H1 (cell line): ENCODE measurements at regions of chr12 and their contacts with region 1.

Region 1: DNA sequence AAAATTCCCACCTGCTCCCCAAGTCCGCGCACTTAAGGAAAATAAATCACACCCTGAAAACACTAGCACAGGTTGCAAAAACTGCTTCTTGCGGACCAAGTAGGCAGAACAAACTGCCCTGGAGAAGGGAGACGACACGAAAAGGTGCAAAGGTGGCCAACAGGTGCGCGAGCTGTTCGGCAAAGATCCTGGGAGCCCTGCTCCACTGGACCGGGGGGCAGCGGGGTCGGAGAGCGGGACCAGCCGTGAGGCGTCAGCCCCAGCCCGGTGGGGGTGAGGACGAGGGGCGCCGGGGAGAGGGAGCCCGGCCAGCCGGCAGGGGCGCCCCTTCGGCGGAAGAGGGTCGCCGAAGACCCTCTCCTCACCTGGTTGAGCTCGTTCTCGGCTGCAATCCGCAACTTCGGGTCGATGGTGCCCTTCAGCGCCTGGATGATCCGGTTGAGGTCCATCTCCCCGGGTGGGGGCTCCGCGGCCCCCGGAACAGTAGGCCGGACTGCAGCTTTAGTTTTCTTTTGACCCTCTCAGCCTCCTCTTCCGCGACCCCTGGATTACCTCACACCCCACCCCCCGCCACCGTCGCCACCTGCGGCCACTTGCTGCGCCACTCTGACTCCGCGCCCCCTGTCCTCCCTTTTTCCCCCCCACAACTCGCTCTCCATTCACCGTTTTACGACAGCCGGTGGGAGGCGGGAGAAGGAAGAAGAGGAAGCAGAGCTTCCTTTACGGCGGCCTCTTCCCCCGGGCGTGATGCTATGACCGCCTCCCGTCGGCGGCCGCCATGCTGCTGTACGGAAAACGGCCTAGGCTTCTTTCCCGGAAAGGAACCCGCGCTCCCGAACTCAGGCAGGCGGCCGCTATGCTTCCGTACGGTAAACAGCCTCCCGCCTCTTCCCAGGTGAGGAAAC is at the start of gene IPO8:
- DNase-seq: peak; percentile 86 to 91
- H3K4me3 ChIP-seq: peak within 1 kb of the TSS; percentile 71 to 92 (median 90)
- H3K27ac ChIP-seq: peak within 1 kb of the TSS; percentile 68; the same call in 1 of the 2 replicates
- H3K4me1 ChIP-seq: peaks cover 0 to 4% (median 2%) of the 10 kb centered on the region in 4 experiments; a peak in 5 of 7 replicates
- H3K27me3 ChIP-seq: no peaks in the 10 kb centered on the region
- CTCF ChIP-seq: peak; percentile 6 to 42 (median 33); a peak in 2 of 4 replicates
- EP300 ChIP-seq: peak in 1 of 2 experiments; percentile 10; a peak in 1 of 3 replicates
- POLR2A ChIP-seq: peak in 1 of 2 experiments; percentile 71; a peak in 2 of 3 replicates
- RAD21 ChIP-seq: 0 out of 4 replicates have a peak, but pooled peaks of 1 of the 2 experiments have one; percentile 0
- total RNA-seq, gene IPO8: 51.0 and 59.8 TPM in 2 replicates

Region 2: GRCh38 chr12:30706476-30706875 is 11.0 kb after region 1 on chr12:
- CTCF ChIA-PET with region 1: interaction called, 3 read pairs
- POLR2A ChIA-PET with region 1: interaction called, 15 read pairs
- DNase-seq: no peak
- H3K4me3 ChIP-seq: no peak overlapping the region
- H3K27ac ChIP-seq: no peak overlapping the region
- H3K4me1 ChIP-seq: no peaks in the 10 kb centered on the region
- H3K27me3 ChIP-seq: no peaks in the 10 kb centered on the region
- CTCF ChIP-seq: no peak
- EP300 ChIP-seq: no peak
- POLR2A ChIP-seq: no peak
- RAD21 ChIP-seq: no peak

Region 3: DNA sequence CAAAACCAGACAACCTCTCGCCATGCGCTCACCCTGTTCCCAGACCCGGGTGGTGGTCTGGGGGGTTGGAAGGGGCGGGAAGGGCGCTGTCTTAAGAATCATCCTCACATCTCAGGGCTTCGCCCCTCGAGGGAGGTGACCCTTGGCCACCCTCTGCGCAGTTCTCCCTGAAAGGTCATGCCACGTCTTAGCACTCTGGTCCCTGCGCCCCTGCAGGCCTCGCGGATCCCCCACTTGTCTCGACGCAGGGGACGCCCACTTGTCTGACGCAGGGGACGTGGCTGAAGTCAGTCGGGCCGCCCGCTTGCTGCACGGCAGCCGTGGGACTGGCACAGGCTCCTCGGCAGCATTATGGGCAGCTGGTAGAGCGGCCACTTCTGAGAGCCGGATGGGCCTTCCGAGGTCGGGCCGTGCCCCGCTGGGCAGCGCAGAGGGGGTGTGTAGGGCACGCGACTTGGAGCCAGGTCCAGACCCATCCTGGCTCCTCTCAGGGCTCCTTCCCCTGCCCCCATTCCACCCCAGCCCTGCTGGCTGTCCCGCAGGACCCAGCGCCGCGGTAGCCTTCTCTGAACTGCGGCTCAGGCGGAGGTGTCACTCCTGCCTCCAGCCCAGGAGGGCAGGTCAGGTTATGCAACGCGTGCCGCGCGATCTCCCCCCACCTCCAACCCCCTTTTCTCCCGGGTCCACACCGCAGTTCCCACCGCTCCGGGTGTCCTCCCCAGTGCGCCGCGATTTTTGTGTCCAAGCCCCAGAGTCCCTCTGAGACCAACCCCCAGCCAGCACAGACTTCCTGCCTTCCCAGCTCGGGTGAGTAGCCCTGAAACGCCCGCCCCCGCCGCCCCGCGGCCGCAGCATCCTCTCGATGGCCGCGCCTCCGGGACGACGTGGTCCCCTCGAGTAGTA is 100.2 kb after region 1 on chr12:
- CTCF ChIA-PET with region 1: interaction called, 6 read pairs
- POLR2A ChIA-PET with region 1: interaction called, 12 read pairs
- DNase-seq: peak in 1 of 2 experiments; percentile 88
- H3K4me3 ChIP-seq: peak overlapping the region; percentile 52 to 79 (median 58)
- H3K27ac ChIP-seq: no peak overlapping the region; the same call in 1 of the 2 replicates
- H3K4me1 ChIP-seq: peaks cover 13 to 22% (median 18%) of the 10 kb centered on the region in 4 experiments
- H3K27me3 ChIP-seq: peaks cover 0 to 10% (median 4%) of the 10 kb centered on the region in 4 experiments; a peak in 6 of 7 replicates
- CTCF ChIP-seq: peak in 2 of 3 experiments; percentile 14 to 26; a peak in 2 of 4 replicates
- EP300 ChIP-seq: no peak
- POLR2A ChIP-seq: peak in 1 of 2 experiments; percentile 49; a peak in 1 of 3 replicates
- RAD21 ChIP-seq: 0 out of 4 replicates have a peak, but pooled peaks of 1 of the 2 experiments have one; percentile 3